ENCODE measurements at regions of chr6 and their contacts with region 1.

Region 1: DNA sequence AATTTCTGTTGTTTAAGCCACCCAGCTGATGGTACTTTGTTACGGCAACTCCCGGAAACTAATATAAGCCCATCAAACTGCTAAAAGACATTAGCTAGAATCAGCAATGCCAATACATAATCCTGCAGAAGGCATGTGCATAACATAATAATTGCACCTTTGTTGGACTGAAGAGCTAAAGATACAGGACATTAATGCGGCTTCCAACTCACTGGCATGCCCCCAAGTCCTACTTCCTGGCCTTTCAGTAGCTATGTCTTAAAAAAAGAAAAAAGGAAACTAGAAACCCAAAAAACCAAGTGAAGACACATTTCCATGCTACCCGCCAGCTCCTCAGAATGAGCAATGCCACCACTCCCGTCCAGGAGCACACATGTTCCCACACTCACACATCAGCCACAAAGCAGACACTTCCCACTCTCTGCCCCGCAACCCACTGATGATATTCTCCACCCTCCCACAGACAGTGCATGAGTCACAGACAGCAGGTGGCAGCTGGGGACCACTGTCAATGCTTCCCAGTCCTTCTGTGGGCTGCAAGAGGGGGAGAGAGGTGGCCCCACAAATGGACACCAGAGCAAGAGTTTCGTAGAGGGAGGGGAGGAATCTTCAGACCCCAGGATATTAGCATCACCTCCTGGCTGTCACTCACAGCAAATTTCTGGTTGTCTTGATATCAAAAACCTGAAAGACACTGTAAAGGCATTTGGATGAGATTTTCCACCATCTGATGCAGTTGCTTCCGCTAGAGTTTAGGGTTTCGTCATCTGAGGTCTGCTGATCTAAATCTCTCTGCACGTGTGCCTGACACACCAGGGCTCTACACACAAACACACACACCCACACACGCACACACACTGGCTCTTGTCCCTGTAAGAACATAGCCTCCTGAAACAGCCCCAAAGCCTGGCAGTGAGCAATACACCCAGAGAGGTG is 32.8 kb downstream of the GFOD1 start:
- DNase-seq: peak; percentile 25
- H3K4me3 ChIP-seq: no peak overlapping the region
- H3K27ac ChIP-seq: peak overlapping the region; percentile 17
- H3K4me1 ChIP-seq: peaks cover 26% of the 10 kb centered on the region
- H3K27me3 ChIP-seq: no peaks in the 10 kb centered on the region
- CTCF ChIP-seq: no peak

Region 2: DNA sequence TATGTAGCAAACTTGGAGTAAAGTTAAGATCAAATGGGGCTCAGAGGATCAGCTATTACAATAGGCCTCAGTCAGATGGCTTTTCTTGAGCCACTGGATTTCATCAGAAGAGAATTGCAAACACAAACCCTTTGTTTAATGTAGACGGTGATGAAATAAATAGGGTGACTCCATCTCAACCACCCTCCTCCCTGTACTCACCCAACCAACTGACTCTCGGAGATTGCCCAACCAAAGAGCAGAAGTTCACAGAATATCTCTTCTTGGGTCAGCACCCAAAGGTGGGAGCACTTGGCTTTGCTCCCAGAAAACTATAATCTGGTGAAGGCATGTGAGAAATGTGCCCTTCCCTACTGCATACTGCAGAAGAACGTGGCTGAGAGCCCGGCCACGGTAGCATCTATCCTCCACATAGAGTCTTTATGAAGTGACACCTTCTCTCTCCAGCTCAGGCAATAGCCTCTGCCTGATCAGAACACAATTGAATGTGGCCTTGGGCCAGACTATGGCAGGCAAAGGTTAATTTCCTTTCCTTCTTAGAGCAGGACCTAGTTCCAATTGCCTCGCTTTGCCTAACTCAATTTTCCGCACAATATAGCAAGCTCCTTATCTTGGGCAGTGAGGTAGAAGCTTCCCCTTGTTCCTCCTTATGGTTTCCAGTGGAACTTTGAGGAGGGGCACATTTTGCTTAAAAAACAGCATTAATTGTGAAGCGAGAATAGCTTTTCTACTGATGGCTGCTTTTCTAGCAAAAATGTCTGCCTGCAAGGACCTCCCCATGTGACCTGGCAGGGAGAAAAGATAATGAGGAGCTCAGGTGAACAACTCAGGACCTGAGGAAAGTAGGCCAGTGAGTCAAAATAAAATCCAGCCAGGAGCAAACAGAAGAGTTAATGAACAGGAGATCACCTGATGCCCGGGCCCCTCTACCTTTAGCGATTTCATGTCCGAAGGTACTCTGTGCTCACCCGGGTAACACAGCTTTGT is 46.6 kb before region 1 on chr6:
- CTCF ChIA-PET with region 1: no interaction called
- dilution Hi-C with region 1: no loop called
- in situ Hi-C with region 1: no loop called
- intact Hi-C with region 1: loop called (anchors 5 kb)
- DNase-seq: peak; percentile 99
- H3K4me3 ChIP-seq: no peak overlapping the region
- H3K27ac ChIP-seq: peak overlapping the region; percentile 96
- H3K4me1 ChIP-seq: peaks cover 32% of the 10 kb centered on the region
- H3K27me3 ChIP-seq: no peaks in the 10 kb centered on the region
- CTCF ChIP-seq: no peak

Region 3: GRCh38 chr6:13470238-13471140 is 15.9 kb after region 1 on chr6:
- CTCF ChIA-PET with region 1: no interaction called
- dilution Hi-C with region 1: no loop called
- in situ Hi-C with region 1: no loop called
- intact Hi-C with region 1: loop called (anchors 2 kb)
- DNase-seq: no peak
- H3K4me3 ChIP-seq: no peak overlapping the region
- H3K27ac ChIP-seq: no peak overlapping the region
- H3K4me1 ChIP-seq: peaks cover 20% of the 10 kb centered on the region
- H3K27me3 ChIP-seq: no peaks in the 10 kb centered on the region
- CTCF ChIP-seq: no peak

Measured in mammary epithelial cell (primary cell).